Prostate gland (tissue), 2 donors: ENCODE measurements at regions of chr3 and their contacts with region 1.

Region 1: GRCh38 chr3:71659864-71660591 is 65.2 kb downstream of the EIF4E3 start:
- DNase-seq: no peak
- H3K4me3 ChIP-seq: no peak overlapping the region
- H3K27ac ChIP-seq: peak overlapping the region in 1 of 2 donors; percentile 20
- H3K4me1 ChIP-seq: no peaks in the 10 kb centered on the region
- H3K27me3 ChIP-seq: no peaks in the 10 kb centered on the region
- CTCF ChIP-seq: no peak
- POLR2A ChIP-seq: no peak

Region 2: DNA sequence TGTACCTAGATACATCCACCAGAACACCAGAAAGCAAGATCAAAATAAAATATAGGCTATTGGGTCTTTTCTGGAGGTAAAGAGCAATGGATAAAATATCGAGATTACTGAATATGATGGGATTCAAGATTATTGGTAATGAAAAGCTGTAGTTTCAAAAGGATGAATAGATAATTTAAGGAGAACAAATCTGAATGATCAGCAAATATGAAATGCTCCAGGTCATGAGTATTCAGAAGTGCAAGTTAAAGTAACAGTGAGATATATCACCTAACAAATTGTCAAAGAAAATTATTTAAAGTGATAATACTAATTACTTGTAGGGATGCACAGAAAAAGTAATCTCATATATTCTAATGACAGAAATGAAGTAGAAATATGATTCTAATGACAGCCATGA is 938.0 kb before region 1 on chr3:
- intact Hi-C with region 1: loop called (anchors 5 kb)
- DNase-seq: no peak
- H3K4me3 ChIP-seq: no peak overlapping the region
- H3K27ac ChIP-seq: no peak overlapping the region
- H3K4me1 ChIP-seq: no peaks in the 10 kb centered on the region
- H3K27me3 ChIP-seq: no peaks in the 10 kb centered on the region
- CTCF ChIP-seq: no peak
- POLR2A ChIP-seq: no peak